Activated CD4-positive, alpha-beta T cell treated with anti-CD3 and anti-CD28 coated beads, Interleukin-2, amount 10 ng/mL, durations not matched to agents 24 days and 14 days (primary cell): ENCODE measurements at regions of chr16 and their contacts with region 1.

Region 1: GRCh38 chr16:85303357-85303901 is 191.2 kb upstream of the CIBAR2 start:
- DNase-seq: peak; percentile 95
- H3K4me3 Mint-ChIP-seq: peak overlapping the region; percentile 86
- H3K27ac Mint-ChIP-seq: peak overlapping the region; percentile 77
- H3K4me1 Mint-ChIP-seq: peaks cover 33% of the 10 kb centered on the region
- H3K27me3 Mint-ChIP-seq: peaks cover 2% of the 10 kb centered on the region

Region 2: GRCh38 chr16:85195900-85196772 is 107.3 kb before region 1 on chr16:
- intact Hi-C with region 1: no loop called
- DNase-seq: no peak
- H3K4me3 Mint-ChIP-seq: no peak overlapping the region
- H3K27ac Mint-ChIP-seq: no peak overlapping the region
- H3K4me1 Mint-ChIP-seq: no peaks in the 10 kb centered on the region
- H3K27me3 Mint-ChIP-seq: peaks cover 2% of the 10 kb centered on the region

Region 3: DNA sequence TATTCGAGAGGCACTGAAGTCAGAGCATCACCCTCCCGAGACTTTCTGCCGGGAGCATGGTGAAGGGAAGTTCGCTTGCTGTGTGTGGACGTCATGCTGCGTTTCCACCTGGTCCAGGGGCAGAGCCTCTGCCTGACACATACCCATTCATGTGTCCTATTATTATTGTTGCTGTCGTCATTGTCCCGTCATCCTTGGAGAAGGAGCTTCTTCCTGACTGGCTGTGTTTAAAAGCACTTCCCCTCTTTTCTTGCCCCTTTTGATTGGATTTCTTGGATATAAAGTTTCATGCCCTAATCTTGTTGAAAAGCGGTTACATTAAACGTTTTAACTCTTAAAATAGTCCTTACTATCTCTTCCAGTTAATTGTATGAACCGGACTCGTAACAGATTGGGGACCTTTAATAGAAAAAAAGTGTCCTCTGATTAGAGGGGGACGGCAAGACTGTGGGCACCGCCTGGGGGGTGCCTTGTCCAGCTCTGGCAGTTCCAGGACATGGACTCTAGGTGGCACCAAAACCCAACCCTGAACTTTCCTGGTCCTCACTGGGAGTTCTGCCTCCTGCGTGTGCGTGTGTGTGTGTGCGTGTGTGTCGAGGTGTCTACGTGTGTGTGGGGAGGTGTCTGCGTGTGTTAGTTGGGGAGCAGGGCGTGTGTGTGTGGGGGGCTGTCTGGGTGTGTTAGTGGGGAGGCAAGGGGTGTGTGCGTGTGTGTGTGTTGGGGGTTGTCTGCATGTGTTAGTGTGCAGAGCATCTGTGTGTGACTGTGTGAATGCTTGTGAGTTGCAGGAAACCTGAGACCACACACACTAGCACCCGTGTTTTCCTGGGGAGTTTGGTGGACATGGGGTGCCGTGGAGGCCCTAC is 57.9 kb before region 1 on chr16:
- intact Hi-C with region 1: no loop called
- DNase-seq: peak; percentile 82
- H3K4me3 Mint-ChIP-seq: no peak overlapping the region
- H3K27ac Mint-ChIP-seq: no peak overlapping the region
- H3K4me1 Mint-ChIP-seq: peaks cover 3% of the 10 kb centered on the region
- H3K27me3 Mint-ChIP-seq: peaks cover 7% of the 10 kb centered on the region

Region 4: DNA sequence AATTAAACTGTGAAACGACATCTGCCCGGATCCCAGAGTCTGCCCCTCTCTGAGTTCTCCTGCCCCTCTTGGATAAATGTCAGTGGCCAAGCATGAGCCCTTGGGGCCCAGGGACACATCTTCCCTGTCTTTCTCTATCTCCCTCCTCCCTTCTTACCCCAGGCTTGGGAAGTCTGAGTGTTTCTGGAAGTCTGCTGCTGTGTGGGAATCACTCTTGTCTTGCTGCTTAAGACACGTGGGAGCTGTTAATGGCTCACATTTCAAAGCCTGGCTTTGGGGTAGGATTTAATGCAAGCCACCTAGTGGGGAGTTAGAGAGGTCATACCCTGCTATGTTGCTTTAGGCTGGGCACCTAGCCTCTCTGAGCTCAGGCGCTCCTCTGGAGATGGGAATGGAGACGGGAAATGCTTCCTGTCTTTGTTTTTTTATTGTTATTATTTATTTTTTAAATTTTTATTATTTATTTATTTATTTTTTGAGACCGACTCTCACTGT is 27.3 kb after region 1 on chr16:
- intact Hi-C with region 1: loop called (anchors 1 kb)
- DNase-seq: peak; percentile 75
- H3K4me3 Mint-ChIP-seq: no peak overlapping the region
- H3K27ac Mint-ChIP-seq: no peak overlapping the region
- H3K4me1 Mint-ChIP-seq: peaks cover 14% of the 10 kb centered on the region
- H3K27me3 Mint-ChIP-seq: peaks cover 11% of the 10 kb centered on the region

Region 5: GRCh38 chr16:85428168-85428898 is 124.9 kb after region 1 on chr16:
- intact Hi-C with region 1: loop called (anchors 5 kb)
- DNase-seq: peak; percentile 84
- H3K4me3 Mint-ChIP-seq: no peak overlapping the region
- H3K27ac Mint-ChIP-seq: no peak overlapping the region
- H3K4me1 Mint-ChIP-seq: no peaks in the 10 kb centered on the region
- H3K27me3 Mint-ChIP-seq: peaks cover 7% of the 10 kb centered on the region